T-cell (primary cell): ENCODE measurements at regions of chr5 and their contacts with region 1.

Region 1: DNA sequence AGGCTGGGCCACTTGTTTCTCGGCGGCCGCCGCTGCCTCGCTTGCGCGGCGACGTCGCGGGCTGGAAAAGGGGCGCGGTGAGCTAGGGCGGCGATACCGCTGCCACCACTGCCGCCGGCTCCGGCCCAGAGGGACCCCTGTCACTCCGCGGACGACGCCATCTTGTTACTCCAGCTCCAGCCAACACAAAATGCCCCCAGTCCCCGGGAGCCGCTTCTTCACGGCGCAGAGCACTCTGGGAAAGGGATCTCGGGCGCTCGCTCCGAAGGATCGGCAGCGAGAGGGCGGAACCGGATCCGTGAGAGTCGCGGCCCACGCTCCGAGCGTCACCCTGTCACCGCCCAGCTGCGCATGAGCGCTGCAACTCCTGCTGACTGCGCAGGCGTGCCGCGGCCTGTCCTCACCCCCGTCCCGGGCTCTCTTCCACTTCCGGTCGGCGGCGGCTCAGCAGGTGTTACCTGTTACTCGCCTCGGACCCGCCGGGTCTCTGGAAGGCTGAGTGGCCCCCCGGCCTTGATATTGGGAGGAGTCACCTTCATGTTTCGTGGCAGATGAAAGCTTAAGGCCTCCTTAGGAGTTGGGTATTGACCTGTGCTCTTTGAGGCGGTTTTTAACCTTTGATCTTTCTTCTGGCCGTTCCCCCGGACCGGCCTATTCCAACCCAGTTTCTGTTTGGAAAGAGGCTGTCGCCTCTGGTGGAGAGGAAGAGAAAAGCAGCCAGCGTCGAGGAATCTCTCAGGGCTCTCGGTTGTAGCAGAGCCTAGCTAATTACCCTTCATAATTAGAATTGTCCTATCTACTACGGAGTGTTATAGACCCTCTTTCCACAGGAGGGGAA is at the start of gene CSNK1A1:
- DNase-seq: peak; percentile 93 to 100 (median 97)
- ATAC-seq: peak; percentile 88 to 92 (median 90)
- H3K4me3 ChIP-seq: peak within 1 kb of the TSS; percentile 98 to 100
- H3K4me3 Mint-ChIP-seq: peak within 1 kb of the TSS; percentile 95 to 97 (median 95)
- H3K27ac ChIP-seq: peak within 1 kb of the TSS; percentile 98
- H3K27ac Mint-ChIP-seq: peak within 1 kb of the TSS; percentile 97 to 98
- H3K4me1 ChIP-seq: peaks cover 16 to 17% of the 10 kb centered on the region in 2 experiments
- H3K4me1 Mint-ChIP-seq: peaks cover 34 to 37% (median 35%) of the 10 kb centered on the region in 3 donors
- H3K27me3 ChIP-seq: no peaks in the 10 kb centered on the region
- H3K27me3 Mint-ChIP-seq: no peaks in the 10 kb centered on the region
- total RNA-seq, gene CSNK1A1: 161 to 193 (median 178) TPM

Region 2: GRCh38 chr5:149517461-149518122 is 33.8 kb before region 1 on chr5:
- CTCF ChIA-PET with region 1: interaction called in 1 of 2 experiments, 10 read pairs
- POLR2A ChIA-PET with region 1: interaction called in 1 of 2 experiments, 5 read pairs
- DNase-seq: no peak
- ATAC-seq: no peak
- H3K4me3 ChIP-seq: no peak overlapping the region
- H3K4me3 Mint-ChIP-seq: no peak overlapping the region
- H3K27ac ChIP-seq: no peak overlapping the region
- H3K27ac Mint-ChIP-seq: peak overlapping the region; percentile 19 to 46
- H3K4me1 ChIP-seq: peaks cover 10 to 11% of the 10 kb centered on the region in 2 experiments
- H3K4me1 Mint-ChIP-seq: peaks cover 69 to 83% (median 77%) of the 10 kb centered on the region in 3 donors
- H3K27me3 ChIP-seq: no peaks in the 10 kb centered on the region
- H3K27me3 Mint-ChIP-seq: no peaks in the 10 kb centered on the region